Posterior cingulate gyrus (tissue), 11 donors: ENCODE measurements at regions of chr5 and their contacts with region 1.

Region 1: GRCh38 chr5:74766849-74767578 is at the starts of genes GFM2 and NSA2:
- DNase-seq: peak; percentile 92 to 99 (median 98)

Region 2: DNA sequence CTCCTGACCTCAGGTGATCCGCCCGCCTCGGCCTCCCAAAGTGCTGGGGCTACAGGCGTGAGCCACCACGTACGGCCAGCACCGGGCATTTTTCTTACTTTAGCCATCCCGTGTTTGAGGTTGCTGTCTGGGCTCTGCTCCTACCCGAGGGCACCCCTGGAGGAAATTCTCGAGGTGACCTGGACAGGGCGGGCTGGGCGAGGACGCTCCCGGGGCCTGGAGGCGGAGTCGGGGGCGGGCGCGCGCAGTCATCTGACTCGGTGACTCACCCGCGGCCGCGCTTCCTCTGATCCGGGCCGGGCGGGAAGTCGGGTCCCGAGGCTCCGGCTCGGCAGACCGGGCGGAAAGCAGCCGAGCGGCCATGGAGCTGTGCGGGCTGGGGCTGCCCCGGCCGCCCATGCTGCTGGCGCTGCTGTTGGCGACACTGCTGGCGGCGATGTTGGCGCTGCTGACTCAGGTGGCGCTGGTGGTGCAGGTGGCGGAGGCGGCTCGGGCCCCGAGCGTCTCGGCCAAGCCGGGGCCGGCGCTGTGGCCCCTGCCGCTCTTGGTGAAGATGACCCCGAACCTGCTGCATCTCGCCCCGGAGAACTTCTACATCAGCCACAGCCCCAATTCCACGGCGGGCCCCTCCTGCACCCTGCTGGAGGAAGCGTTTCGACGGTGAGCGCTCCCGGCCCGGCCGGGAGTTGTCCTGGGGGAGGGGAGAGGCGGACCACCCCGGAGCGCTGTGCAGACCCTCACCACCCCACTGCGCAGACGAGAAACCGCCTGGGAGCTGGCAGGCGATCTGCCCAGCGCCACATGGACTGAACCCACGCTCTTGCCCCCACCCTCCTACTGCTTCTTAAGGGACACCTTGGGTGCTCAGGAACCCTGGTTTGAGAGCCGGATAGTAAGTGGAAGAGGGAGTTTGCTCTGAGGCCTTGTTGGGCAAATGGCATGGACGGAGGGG is 81.8 kb before region 1 on chr5 and contains the start of gene HEXB:
- intact Hi-C with region 1: loop called (anchors 5 kb)
- DNase-seq: peak; percentile 74 to 98 (median 86)

Region 3: DNA sequence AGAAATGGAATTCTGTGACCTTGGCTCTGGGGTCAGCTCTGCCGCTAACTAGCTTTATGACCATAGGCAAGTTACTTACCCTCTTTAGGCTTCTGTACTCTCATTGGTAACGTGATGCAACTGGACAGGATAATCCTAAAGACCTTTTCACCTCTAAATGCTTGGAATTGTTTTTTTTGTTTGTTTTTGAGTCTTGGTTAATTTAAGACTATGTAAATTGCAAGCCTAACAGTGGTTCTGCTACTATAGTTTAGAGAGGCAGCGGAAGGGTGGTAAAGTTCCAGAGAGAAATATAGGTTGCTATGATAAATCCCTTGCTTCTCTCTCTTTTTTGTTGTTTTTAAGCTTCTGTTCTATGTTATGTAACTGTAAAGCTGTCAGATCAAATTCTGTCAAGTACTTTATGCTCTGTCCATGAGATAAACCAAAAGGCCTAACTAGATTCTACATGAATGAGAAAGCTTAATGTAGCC is 81.6 kb after region 1 on chr5:
- intact Hi-C with region 1: loop called (anchors 10 kb)
- DNase-seq: no peak

Region 4: DNA sequence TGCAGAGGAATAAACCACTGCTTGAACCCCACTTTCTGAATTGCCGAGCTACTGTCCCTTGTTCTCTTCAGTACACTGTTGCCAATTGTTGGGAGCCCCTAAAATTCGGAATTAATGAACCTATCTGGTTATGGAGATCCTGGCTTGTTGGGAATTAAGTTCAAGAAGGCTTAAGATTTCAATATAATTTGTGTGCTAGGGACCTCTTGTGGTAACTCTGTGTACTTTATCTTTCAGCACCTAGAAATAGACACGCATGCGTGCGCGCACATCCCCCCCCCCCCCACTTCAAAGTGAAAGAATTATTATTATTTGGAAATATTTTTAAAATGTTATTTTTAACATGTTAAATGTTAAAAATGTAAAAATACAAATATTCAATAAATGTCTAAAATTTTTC is 152.5 kb after region 1 on chr5:
- intact Hi-C with region 1: loop called (anchors 1 kb)
- DNase-seq: no peak

Region 5: GRCh38 chr5:75336625-75337339 is 569.8 kb after region 1 on chr5 and contains the start of gene HMGCR:
- intact Hi-C with region 1: loop called (anchors 5 kb)
- DNase-seq: peak; percentile 99 to 100 (median 99)

Region 6: DNA sequence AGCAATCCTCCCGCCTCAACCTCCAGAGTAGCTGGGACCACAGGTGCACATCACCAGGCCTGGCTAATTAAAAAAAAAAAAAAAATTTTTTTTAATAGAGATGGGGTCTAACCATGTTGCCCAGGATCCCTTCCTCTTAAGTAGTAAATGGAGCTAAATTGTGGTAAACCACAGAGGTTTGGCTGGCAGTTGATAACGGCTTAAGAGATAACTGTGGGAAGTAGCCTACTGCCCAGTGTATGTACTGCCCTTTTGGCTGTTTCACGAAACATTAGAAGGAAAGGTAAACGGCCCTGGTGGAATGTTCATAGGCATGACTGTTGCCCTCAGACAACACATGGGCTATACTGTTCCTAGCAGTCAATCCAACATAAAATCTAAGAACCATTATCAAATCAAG is 614.4 kb after region 1 on chr5:
- intact Hi-C with region 1: no loop called
- DNase-seq: no peak